ENCODE measurements at regions of chr20 and their contacts with region 1.

Region 1: DNA sequence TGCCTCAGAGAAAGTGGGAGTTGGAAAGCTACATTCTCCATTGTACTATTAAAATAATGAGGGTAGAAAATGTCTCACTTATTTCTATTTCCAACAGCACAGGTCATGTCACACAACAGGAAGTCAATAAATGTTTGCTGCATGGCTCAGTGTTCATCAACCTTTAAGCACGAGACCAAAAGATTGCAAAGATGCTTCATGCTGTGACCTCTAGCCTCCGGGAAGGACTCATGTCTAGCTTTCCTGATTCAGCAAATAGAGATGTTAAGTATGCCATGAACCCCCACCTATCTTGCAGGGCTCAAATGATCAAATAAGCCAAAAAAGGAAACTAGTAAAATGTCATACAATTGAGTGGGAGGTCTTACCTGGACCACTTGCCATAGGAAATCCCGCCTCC is 57.4 kb downstream of the NCOA6 start:
- DNase-seq: no peak
- ATAC-seq: no peak
- H3K4me3 ChIP-seq: no peak overlapping the region
- H3K27ac ChIP-seq: no peak overlapping the region
- H3K4me1 ChIP-seq: no peaks in the 10 kb centered on the region
- H3K27me3 ChIP-seq: no peaks in the 10 kb centered on the region
- CTCF ChIP-seq: no peak
- POLR2A ChIP-seq: no peak
- RAD21 ChIP-seq: no peak

Region 2: GRCh38 chr20:34190679-34191090 is 577.4 kb before region 1 on chr20:
- CTCF ChIA-PET with region 1: interaction called, 27 read pairs
- POLR2A ChIA-PET with region 1: no interaction called
- RAD21 ChIA-PET with region 1: interaction called, 3 to 6 read pairs
- intact Hi-C with region 1: loop called (anchors 2 kb)
- DNase-seq: peak; percentile 67
- ATAC-seq: peak; percentile 100
- H3K4me3 ChIP-seq: no peak overlapping the region
- H3K27ac ChIP-seq: no peak overlapping the region
- H3K4me1 ChIP-seq: no peaks in the 10 kb centered on the region
- H3K27me3 ChIP-seq: no peaks in the 10 kb centered on the region
- CTCF ChIP-seq: peak; percentile 70 to 95 (median 88); a peak in 5 of 6 replicates
- POLR2A ChIP-seq: no peak
- RAD21 ChIP-seq: peak; percentile 95

Region 3: GRCh38 chr20:34538671-34539123 is 229.4 kb before region 1 on chr20:
- CTCF ChIA-PET with region 1: interaction called, 6 read pairs
- POLR2A ChIA-PET with region 1: no interaction called
- RAD21 ChIA-PET with region 1: interaction called in 1 of 2 experiments, 3 read pairs
- intact Hi-C with region 1: loop called (anchors 2 kb)
- DNase-seq: no peak
- ATAC-seq: peak; percentile 75
- H3K4me3 ChIP-seq: no peak overlapping the region
- H3K27ac ChIP-seq: no peak overlapping the region
- H3K4me1 ChIP-seq: no peaks in the 10 kb centered on the region
- H3K27me3 ChIP-seq: no peaks in the 10 kb centered on the region
- CTCF ChIP-seq: peak; percentile 49 to 88 (median 88); a peak in 5 of 6 replicates
- POLR2A ChIP-seq: no peak
- RAD21 ChIP-seq: peak; percentile 60; the same call in 1 of the 2 replicates

Region 4: DNA sequence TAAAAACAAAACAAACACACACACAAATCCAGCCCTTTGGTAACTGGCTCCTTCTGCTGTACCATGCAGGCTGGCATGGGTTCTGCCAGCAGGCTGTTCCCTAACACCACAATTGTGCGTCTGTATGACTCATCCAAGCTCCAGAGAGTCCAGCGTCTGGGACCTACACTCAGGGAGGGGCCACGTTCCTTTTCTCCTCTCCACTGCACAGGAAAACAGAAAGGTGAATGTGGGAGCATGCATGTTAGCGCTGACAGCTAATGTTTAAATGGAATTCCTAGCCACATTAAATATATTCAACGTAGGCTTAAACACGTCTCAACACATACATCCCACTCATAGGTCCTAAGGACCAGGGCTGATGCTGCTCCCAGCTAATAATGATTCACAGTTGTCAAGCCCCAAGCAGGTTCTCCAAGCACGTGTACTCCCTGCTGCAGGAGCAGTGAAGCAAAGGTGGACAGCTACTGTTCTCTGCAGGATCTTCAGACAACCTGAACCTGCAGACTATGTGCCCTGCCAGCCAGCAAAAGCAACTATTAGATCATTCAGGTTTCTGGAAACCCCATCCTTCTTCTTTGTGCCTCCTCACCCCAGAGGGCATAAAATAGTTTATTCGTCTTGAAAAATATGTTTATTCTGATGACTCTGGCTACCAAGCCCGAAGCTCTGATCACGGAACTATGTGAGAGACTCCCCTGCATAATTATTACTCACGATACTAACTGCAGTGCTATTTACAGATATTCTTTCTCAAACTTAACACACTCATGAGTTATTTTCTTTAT is 188.7 kb before region 1 on chr20:
- CTCF ChIA-PET with region 1: interaction called, 4 read pairs
- POLR2A ChIA-PET with region 1: no interaction called
- RAD21 ChIA-PET with region 1: no interaction called
- intact Hi-C with region 1: loop called (anchors 2 kb)
- DNase-seq: peak; percentile 28
- ATAC-seq: peak; percentile 89
- H3K4me3 ChIP-seq: no peak overlapping the region
- H3K27ac ChIP-seq: no peak overlapping the region
- H3K4me1 ChIP-seq: peaks cover 0 to 31% of the 10 kb centered on the region in 2 experiments; a peak in 2 of 4 replicates
- H3K27me3 ChIP-seq: no peaks in the 10 kb centered on the region
- CTCF ChIP-seq: peak; percentile 46 to 60 (median 49); a peak in 5 of 6 replicates
- POLR2A ChIP-seq: no peak
- RAD21 ChIP-seq: peak; percentile 82

Region 5: DNA sequence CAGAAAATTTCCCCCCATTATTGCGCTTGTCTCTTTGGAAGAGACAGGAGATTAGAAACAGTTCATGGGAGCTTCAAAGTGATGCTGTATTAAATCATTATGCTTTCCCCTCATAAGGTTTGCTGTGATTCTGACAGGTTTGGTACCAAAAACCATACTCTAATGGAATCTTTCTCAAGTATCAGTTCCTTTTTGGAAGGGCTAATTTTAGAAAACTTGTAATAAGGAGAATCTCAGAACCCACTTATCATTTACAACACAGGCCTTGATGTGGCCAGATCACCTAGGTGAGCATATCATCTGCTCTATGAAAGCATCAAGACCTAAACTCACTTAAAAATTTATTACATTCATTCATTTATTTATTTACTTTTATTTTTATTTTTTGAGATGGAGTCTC is 12.7 kb before region 1 on chr20:
- CTCF ChIA-PET with region 1: interaction called, 17 read pairs
- POLR2A ChIA-PET with region 1: no interaction called
- RAD21 ChIA-PET with region 1: no interaction called
- intact Hi-C with region 1: no loop called
- DNase-seq: no peak
- ATAC-seq: no peak
- H3K4me3 ChIP-seq: no peak overlapping the region
- H3K27ac ChIP-seq: no peak overlapping the region
- H3K4me1 ChIP-seq: no peaks in the 10 kb centered on the region
- H3K27me3 ChIP-seq: no peaks in the 10 kb centered on the region
- CTCF ChIP-seq: no peak
- POLR2A ChIP-seq: no peak
- RAD21 ChIP-seq: no peak

Region 6: GRCh38 chr20:34781220-34781619 is 13.1 kb after region 1 on chr20:
- CTCF ChIA-PET with region 1: interaction called, 16 read pairs
- POLR2A ChIA-PET with region 1: no interaction called
- RAD21 ChIA-PET with region 1: no interaction called
- intact Hi-C with region 1: no loop called
- DNase-seq: no peak
- ATAC-seq: no peak
- H3K4me3 ChIP-seq: no peak overlapping the region
- H3K27ac ChIP-seq: no peak overlapping the region
- H3K4me1 ChIP-seq: no peaks in the 10 kb centered on the region
- H3K27me3 ChIP-seq: no peaks in the 10 kb centered on the region
- CTCF ChIP-seq: no peak
- POLR2A ChIP-seq: no peak
- RAD21 ChIP-seq: no peak